ENCODE measurements at regions of chr12 and their contacts with region 1.

Region 1: GRCh38 chr12:101876861-101877815 is at the start of gene DRAM1:
- DNase-seq: peak; percentile 71
- H3K4me3 ChIP-seq: peak within 1 kb of the TSS; percentile 99
- H3K27ac ChIP-seq: peak within 1 kb of the TSS; percentile 96
- H3K27me3 ChIP-seq: no peaks in the 10 kb centered on the region
- CTCF ChIP-seq: no peak
- polyA plus RNA-seq, gene DRAM1: 54.9 and 57.5 TPM in 2 replicates

Region 2: DNA sequence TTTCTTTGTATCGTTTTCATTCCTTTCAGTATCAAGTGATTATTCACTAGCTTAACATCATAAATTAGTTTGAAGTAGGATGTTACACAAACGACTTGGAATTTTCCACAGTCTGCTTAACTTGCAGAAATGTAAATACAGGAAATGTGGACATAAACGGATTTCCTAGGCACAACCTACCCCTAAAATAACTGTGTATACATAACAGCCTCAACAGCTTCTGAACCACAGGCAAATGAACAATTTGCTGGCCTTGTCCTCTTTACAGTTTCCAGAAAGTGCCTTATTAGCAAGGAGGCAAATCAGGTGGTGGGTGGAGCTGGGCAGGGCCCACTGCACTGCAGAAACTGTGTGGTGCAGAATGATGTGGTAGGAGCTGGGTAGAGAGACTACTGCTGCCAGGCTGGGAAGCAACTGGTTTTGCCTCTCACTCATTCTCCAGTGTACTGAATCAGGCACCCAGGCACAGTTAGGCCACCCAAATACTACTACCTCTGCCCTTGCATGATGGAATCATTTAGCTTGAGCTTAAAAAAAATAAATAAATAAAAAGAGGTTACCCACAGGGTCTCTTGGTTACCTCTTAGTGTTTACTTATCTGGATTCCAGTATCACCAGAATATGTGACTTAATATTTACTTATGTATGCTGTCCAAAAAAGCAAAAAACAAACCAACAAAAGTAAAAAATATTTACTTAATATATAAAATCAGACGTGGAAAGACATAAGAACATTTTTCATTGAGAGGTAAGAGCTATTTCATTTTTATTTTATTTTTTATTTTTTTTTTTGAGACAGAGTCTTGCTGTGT is 14.5 kb after region 1 on chr12:
- CTCF ChIA-PET with region 1: interaction called, 6 read pairs
- POLR2A ChIA-PET with region 1: interaction called, 25 read pairs
- DNase-seq: peak; percentile 75
- H3K4me3 ChIP-seq: peak overlapping the region; percentile 15
- H3K27ac ChIP-seq: peak overlapping the region; percentile 90
- H3K27me3 ChIP-seq: no peaks in the 10 kb centered on the region
- CTCF ChIP-seq: no peak

Measured in AG04450 (cell line).